ENCODE measurements at regions of chr5 and their contacts with region 1.

Region 1: GRCh38 chr5:4879693-4880303 is 260.3 kb upstream of the ADAMTS16 start:
- DNase-seq: peak; percentile 66 to 88 (median 85)
- ATAC-seq: peak; percentile 67 to 77
- H3K4me3 ChIP-seq: no peak overlapping the region
- H3K27ac ChIP-seq: no peak overlapping the region
- H3K4me1 ChIP-seq: no peaks in the 10 kb centered on the region
- H3K27me3 ChIP-seq: no peaks in the 10 kb centered on the region

Region 2: DNA sequence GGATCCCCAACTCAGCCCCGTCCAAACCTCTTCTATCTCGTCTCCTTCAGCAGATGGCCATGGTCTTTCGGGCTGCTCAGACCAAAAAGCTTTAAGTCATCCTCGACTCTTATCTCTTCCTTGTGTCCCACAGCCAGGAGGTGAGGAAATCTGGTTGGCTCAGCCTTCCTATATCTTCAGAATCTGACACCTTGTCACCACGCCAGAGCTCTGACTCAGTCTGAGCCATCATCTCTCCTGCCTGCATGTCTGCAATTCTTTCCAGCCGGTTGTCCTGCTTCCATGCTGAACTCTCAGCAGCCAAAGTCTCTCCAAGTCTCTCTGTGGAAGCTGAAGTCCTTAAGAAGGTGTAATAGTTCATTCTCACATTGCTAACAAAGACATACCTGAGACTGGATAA is 159.0 kb before region 1 on chr5:
- intact Hi-C with region 1: no loop called
- DNase-seq: peak in 2 of 3 donors; percentile 29 to 30
- ATAC-seq: peak; percentile 33 to 51
- H3K4me3 ChIP-seq: no peak overlapping the region
- H3K27ac ChIP-seq: no peak overlapping the region
- H3K4me1 ChIP-seq: no peaks in the 10 kb centered on the region
- H3K27me3 ChIP-seq: no peaks in the 10 kb centered on the region

Region 3: DNA sequence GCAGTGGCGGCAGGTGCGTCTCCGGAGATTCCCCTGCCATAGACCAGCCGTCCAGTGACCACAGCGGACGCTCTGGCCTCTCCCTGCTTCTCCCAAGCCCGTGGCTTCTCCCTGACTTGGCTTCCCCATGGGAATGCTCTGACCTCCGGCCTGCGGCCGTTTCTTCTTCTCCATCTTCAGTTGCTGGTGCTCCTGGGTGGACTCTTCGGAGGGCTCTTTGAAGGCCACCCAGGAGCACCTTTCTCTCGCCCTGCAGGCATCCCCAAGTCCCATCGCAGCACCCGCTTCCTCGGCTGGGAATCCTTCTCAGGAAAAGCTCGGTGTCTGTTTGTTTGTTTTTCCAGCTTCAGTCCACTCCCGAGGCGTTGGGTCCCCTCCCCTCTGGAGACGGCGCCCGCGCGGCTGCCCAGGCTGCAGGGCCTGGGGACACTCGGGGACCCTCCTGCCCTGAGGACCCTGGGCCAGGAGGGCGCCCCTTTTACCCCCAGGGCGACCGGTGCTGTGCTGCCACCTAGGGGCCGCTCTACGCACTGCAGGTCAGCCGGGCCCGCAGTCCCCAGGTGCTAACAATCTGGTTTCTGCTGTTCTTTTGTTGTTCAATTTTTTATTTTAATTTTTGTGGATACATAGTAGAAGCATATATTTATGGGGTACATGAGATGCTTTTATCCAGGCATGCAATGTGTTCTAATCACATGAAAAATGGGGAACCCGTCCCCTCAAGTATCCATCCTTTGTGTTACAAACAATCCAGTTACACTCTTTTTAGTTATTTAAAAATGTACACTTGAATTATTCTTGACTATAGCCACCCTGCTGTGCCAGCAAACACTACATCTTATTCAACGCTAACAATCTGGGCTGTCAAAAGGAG is 62.4 kb after region 1 on chr5:
- intact Hi-C with region 1: loop called in 1 of 4 experiments (anchors 5 kb)
- DNase-seq: peak in 2 of 3 donors; percentile 64 to 65
- ATAC-seq: peak in 1 of 2 donors; percentile 61
- H3K4me3 ChIP-seq: no peak overlapping the region
- H3K27ac ChIP-seq: no peak overlapping the region
- H3K4me1 ChIP-seq: no peaks in the 10 kb centered on the region
- H3K27me3 ChIP-seq: no peaks in the 10 kb centered on the region

Region 4: GRCh38 chr5:5014586-5015235 is 134.9 kb after region 1 on chr5:
- intact Hi-C with region 1: no loop called
- DNase-seq: peak in 2 of 3 donors; percentile 28 to 46
- ATAC-seq: peak in 1 of 2 donors; percentile 22
- H3K4me3 ChIP-seq: no peak overlapping the region
- H3K27ac ChIP-seq: no peak overlapping the region
- H3K4me1 ChIP-seq: no peaks in the 10 kb centered on the region
- H3K27me3 ChIP-seq: no peaks in the 10 kb centered on the region

Region 5: DNA sequence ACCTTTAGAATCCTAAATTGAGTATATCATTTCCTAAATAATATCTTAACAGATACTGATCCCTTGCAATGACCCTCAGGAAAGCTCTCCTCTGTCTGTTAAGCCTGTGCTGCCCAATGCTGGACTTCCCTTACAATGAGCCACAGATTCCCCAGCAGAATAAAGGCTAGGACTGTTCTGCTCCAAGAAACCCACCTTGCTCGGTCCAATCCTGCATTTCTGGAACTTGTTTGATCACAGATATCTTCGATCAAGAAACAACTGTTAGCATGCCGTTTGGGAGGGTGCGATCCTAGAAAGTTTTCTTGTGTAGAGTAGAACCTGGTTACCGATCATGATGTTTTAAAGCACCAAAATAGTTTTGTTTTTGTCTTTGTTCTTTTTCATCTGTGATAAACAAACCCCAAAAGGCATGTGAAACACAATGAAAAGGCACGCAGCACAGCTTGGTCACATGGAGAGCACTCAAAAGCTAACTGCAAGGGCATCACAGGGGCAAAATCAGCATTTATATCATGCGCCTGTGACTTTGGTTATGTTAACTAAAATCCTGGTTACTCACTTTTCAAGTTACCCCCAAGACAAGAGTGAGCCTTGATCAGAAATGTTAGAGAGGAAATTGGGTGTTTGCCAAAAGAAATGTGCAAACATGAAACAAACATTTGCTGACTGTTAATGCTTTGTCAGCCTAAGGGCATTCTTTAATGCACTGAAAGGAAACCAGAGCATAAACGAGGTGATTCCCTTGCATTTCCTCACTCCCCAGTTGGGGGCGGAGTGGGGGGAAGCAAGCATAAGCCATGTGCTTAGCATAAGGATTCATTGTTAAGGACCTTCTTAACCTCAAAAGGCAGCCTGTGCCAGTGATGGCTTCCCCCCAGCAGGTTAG is 198.5 kb after region 1 on chr5:
- intact Hi-C with region 1: no loop called
- DNase-seq: no peak
- ATAC-seq: no peak
- H3K4me3 ChIP-seq: no peak overlapping the region
- H3K27ac ChIP-seq: no peak overlapping the region
- H3K4me1 ChIP-seq: no peaks in the 10 kb centered on the region
- H3K27me3 ChIP-seq: no peaks in the 10 kb centered on the region

Region 6: GRCh38 chr5:5183189-5183699 is 303.4 kb after region 1 on chr5:
- intact Hi-C with region 1: no loop called
- DNase-seq: peak in 1 of 3 donors; percentile 32
- ATAC-seq: no peak
- H3K4me3 ChIP-seq: no peak overlapping the region
- H3K27ac ChIP-seq: no peak overlapping the region
- H3K4me1 ChIP-seq: no peaks in the 10 kb centered on the region
- H3K27me3 ChIP-seq: no peaks in the 10 kb centered on the region

Region 7: GRCh38 chr5:5421961-5422818 is 542.4 kb after region 1 on chr5 and contains the start of gene ICE1:
- intact Hi-C with region 1: loop called in 3 of 4 experiments (anchors 5 to 10 kb)
- DNase-seq: peak; percentile 98 to 99 (median 99)
- ATAC-seq: peak; percentile 99 to 100
- H3K4me3 ChIP-seq: peak within 1 kb of the TSS; percentile 86
- H3K27ac ChIP-seq: peak within 1 kb of the TSS; percentile 91
- H3K4me1 ChIP-seq: peaks cover 6% of the 10 kb centered on the region
- H3K27me3 ChIP-seq: no peaks in the 10 kb centered on the region
- total RNA-seq, gene ICE1: 17.5 to 19.5 (median 18.7) TPM